ENCODE measurements at regions of chr11 and their contacts with region 1.

Region 1: GRCh38 chr11:15650105-15650938 is 535.6 kb downstream of the INSC start:
- DNase-seq: peak; percentile 96
- H3K4me3 ChIP-seq: peak overlapping the region; percentile 34 to 40
- H3K27ac ChIP-seq: peak overlapping the region in 1 of 2 experiments; percentile 87; a peak in 2 of 4 replicates
- H3K4me1 ChIP-seq: peaks cover 0 to 20% of the 10 kb centered on the region in 2 experiments; a peak in 2 of 4 replicates
- H3K27me3 ChIP-seq: no peaks in the 10 kb centered on the region
- CTCF ChIP-seq: peak; percentile 77
- EP300 ChIP-seq: peak in 1 of 2 experiments; percentile 38; a peak in 1 of 4 replicates
- RAD21 ChIP-seq: peak; percentile 96

Region 2: DNA sequence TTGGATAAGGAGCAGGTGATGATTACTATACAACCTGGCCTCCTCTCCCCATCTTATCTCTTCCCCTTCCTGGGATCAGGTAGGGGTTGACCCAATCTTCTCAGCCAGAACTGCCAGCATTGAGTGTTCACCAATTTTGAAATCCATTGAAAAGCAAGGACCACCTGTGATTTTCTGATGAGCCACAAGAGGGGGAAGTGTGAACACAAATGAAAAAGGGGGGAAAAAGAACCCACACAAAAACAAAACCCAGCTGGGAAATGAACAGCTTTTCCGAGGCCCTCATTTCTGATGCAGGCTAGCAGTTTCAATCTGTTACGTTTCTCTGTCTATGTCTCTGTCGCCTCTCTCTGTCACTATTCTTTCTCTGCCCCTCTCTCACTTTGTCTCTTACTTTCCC is 373.7 kb before region 1 on chr11:
- CTCF ChIA-PET with region 1: interaction called, 13 read pairs
- POLR2A ChIA-PET with region 1: no interaction called
- DNase-seq: peak; percentile 42
- H3K4me3 ChIP-seq: no peak overlapping the region
- H3K27ac ChIP-seq: no peak overlapping the region
- H3K4me1 ChIP-seq: no peaks in the 10 kb centered on the region; a peak in 2 of 4 replicates
- H3K27me3 ChIP-seq: no peaks in the 10 kb centered on the region
- CTCF ChIP-seq: peak; percentile 37; the same call in 1 of the 2 replicates
- EP300 ChIP-seq: no peak
- RAD21 ChIP-seq: peak; percentile 84

Region 3: DNA sequence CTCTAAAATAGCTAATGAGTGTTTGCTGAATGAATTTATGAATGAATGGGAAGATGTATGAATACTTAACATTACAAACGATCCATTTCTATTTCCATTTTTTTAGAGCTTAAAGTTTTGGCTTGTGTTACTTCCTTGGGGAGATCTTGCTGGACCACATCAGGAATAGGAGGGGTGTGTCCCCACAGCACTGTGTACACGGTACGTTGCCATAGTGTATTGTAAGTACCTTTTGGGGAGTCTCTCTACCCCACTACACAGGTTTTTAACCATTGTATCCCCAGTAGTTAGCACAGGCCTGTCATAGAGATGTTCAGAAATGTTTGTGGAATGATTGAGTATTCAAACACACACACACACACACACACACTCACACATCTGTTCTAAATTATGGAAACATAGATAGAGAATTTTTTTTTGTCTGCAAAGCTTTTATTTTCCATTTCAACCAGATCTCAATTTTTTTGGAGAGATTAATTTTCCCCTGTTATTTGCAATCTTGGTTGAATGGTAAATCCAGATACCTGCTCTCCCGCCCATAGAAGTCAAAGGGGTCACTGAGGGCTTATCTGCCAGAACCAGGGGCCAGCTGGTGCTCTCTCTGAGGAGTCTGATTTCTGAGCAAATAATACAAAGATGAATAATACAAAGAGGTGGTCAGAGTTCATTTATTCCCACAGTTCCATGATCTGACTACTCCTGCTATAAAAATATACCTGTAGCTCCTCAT is 64.6 kb before region 1 on chr11:
- CTCF ChIA-PET with region 1: interaction called, 11 read pairs
- POLR2A ChIA-PET with region 1: interaction called, 3 read pairs
- DNase-seq: peak; percentile 58
- H3K4me3 ChIP-seq: no peak overlapping the region
- H3K27ac ChIP-seq: peak overlapping the region in 1 of 2 experiments; percentile 99; a peak in 2 of 4 replicates
- H3K4me1 ChIP-seq: peaks cover 0 to 46% of the 10 kb centered on the region in 2 experiments; a peak in 2 of 4 replicates
- H3K27me3 ChIP-seq: no peaks in the 10 kb centered on the region
- CTCF ChIP-seq: no peak
- EP300 ChIP-seq: peak in 1 of 2 experiments; percentile 95; a peak in 2 of 4 replicates
- RAD21 ChIP-seq: peak; percentile 18; the same call in 1 of the 2 replicates

Region 4: GRCh38 chr11:15688351-15688792 is 38.0 kb after region 1 on chr11:
- CTCF ChIA-PET with region 1: no interaction called
- POLR2A ChIA-PET with region 1: no interaction called
- DNase-seq: no peak
- H3K4me3 ChIP-seq: no peak overlapping the region
- H3K27ac ChIP-seq: no peak overlapping the region
- H3K4me1 ChIP-seq: no peaks in the 10 kb centered on the region
- H3K27me3 ChIP-seq: no peaks in the 10 kb centered on the region
- CTCF ChIP-seq: no peak
- EP300 ChIP-seq: no peak
- RAD21 ChIP-seq: no peak

Region 5: DNA sequence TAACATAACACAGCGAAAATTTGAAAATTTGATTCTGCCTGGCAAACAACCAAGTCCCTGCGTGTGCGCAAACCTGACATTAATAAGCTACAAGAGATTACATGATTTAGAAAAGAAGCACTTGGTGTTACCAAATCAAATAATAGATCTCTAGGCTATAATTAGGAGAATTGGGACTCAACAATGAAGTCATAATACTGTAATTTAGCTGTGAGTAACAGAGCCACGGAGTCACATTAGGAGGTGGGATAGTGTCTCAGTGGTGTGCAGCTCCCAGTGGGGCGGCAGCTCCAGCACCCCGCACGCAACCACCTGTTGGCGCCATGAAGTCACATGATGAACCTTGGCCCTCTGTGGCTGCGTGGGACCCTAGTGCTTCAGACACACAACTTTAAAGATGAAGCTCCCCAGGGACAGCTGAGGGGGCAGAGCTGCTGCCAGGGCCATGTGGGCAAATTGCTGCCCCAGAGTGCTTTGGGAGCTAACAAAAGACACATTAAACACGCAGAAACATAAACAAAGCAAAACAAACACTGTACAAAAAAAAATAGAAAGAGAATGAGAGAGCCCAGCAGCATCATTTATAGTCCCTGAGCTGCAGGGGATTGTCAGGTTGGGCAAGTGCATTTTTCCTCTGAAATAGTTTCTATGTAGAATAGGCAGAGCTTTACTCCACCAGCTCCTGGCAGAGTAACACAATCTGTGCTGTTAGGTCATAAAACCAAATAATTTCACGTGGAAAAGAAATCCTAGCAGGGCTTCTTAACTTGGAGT is 100.4 kb after region 1 on chr11:
- CTCF ChIA-PET with region 1: interaction called, 13 read pairs
- POLR2A ChIA-PET with region 1: interaction called, 10 read pairs
- DNase-seq: peak; percentile 52
- H3K4me3 ChIP-seq: no peak overlapping the region
- H3K27ac ChIP-seq: peak overlapping the region in 1 of 2 experiments; percentile 56; a peak in 1 of 4 replicates
- H3K4me1 ChIP-seq: peaks cover 0 to 21% of the 10 kb centered on the region in 2 experiments; a peak in 2 of 4 replicates
- H3K27me3 ChIP-seq: no peaks in the 10 kb centered on the region
- CTCF ChIP-seq: no peak
- EP300 ChIP-seq: peak in 1 of 2 experiments; percentile 93; a peak in 2 of 4 replicates
- RAD21 ChIP-seq: no peak; the same call in 1 of the 2 replicates

Region 6: DNA sequence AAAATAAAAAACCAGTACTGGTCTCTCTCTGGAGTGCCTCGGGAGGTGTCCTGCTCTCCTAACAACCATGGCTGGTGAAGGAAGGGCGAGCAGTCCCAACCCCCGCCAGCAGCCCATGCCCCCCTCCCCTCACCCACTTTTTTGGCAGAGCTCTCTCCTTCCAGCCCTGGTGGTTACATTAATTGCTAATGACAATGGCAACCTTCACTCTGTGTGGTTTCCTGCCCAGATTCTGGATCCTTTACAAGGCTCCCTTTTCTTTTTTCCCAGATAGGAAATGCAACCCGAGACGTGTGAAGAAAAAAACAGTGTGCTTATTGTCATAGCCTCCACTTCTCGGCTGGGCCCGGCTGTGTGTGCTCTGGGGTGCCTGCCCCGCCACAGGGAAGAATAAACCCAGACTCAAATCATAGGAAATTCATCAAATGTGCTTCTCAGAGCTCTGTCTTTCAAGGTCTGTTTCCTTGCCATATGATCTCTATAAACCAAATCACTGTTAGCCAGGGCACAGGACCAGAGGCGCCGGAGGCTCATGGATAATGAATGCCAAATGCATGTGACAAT is 193.1 kb after region 1 on chr11:
- CTCF ChIA-PET with region 1: interaction called, 12 read pairs
- POLR2A ChIA-PET with region 1: interaction called, 3 read pairs
- DNase-seq: peak; percentile 60
- H3K4me3 ChIP-seq: no peak overlapping the region
- H3K27ac ChIP-seq: peak overlapping the region; percentile 27 to 97; a peak in 3 of 4 replicates
- H3K4me1 ChIP-seq: peaks cover 6 to 65% of the 10 kb centered on the region in 2 experiments; a peak in 3 of 4 replicates
- H3K27me3 ChIP-seq: no peaks in the 10 kb centered on the region
- CTCF ChIP-seq: no peak
- EP300 ChIP-seq: peak in 1 of 2 experiments; percentile 95; a peak in 2 of 4 replicates
- RAD21 ChIP-seq: peak; percentile 16; the same call in 1 of the 2 replicates

Region 7: DNA sequence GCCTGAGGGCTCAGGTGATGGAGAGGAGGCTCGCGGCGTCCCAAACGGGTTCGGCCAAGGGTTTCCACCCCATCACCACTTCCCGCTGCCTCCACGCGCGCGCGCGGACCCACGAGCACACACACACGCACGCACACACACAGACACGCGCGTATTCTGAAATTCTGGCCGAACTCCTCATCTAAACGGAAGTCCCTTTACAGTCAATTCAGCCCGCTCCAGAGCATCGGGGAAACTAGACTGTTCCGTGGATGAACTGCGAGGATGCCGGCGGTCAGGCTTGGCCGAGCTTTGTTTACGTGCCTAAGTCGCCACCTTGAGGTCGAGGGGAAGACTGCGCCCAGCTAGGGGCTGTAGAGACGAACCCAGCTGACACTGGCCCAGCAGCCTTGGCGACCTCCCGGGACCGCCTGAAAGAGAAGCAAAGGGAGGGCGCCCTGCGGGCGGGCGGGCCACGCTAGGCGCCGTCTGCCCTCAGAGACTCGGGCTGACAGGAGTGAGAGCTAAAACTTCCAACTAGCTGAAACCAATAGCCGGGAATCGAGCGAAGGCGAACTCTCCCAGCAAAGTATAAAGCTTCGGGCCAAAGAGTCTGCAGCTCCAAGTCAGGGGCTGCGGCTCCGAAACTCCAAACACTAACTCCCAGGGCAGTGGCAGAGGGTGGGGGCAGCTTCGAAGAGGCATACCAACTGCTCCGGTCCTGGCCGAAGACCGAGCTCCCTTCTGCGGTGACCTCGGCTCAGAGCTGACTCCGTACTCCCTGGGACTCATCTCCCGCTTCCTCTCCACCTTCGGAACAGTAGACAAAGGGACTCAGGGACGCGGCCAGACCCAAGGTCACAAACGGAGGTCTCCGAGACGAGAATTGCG is 963.4 kb after region 1 on chr11:
- CTCF ChIA-PET with region 1: interaction called, 37 read pairs
- POLR2A ChIA-PET with region 1: interaction called, 12 read pairs
- DNase-seq: peak; percentile 91
- H3K4me3 ChIP-seq: peak overlapping the region; percentile 54 to 62
- H3K27ac ChIP-seq: peak overlapping the region in 1 of 2 experiments; percentile 69; a peak in 1 of 4 replicates
- H3K4me1 ChIP-seq: peaks cover 0 to 21% of the 10 kb centered on the region in 2 experiments; a peak in 2 of 4 replicates
- H3K27me3 ChIP-seq: peaks cover 32% of the 10 kb centered on the region; the same call in 1 of the 2 replicates
- CTCF ChIP-seq: peak; percentile 80
- EP300 ChIP-seq: no peak
- RAD21 ChIP-seq: peak; percentile 95

Measured in SK-N-SH (cell line).